ENCODE measurements at regions of chr2 and their contacts with region 1.

Region 1: DNA sequence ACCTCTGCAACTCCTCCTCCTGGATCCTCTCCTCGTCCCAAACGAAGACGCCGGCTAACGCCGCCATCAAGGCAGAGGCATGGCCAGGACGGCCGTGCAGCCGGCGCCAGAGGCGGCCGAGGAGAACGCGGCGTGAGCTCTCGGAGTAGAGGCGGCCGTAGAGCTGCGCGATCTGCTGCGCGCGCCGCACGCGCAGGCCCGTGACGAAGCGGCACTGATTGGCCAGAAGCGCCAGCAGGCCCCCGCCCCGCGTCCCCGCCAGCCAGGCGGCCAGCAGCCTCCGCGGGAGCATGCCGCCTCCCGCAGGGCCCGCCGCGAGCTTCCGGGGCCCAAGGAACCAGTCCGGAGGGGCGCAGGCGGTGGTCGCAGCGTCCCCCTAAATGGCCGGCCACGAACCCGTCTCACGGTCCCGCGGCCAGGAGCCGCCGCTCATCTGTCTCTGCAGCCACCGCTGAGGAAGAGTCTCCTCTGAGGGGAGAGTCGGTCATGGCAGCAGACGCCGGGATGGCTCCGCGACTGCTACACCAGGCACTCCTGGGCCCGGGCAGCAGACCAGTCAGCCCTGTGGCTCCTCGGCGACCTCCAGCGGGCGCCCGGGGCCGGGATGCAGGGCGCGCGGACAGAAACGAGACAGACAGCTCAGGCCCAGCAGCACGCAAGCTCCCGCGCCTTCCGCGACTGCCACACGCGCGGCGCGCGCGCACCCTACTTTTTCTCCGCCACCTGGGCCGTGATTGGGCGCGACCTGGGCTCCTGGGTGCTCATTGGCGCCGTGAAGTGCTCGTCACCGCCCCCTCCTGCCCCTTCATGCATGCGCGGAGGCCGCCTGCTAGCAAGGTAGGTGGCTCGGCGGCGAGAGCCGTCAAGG is at the start of gene STARD7:
- DNase-seq: peak; percentile 98 to 99
- ATAC-seq: peak; percentile 59 to 65
- H3K4me3 ChIP-seq: peak within 1 kb of the TSS; percentile 68 to 94 (median 89)
- H3K27ac ChIP-seq: peak within 1 kb of the TSS; percentile 90 to 99 (median 98)
- H3K4me1 ChIP-seq: peaks cover 31 to 46% of the 10 kb centered on the region in 2 donors
- H3K27me3 ChIP-seq: no peaks in the 10 kb centered on the region
- CTCF ChIP-seq: peak in 4 of 5 experiments; percentile 21 to 46 (median 29)
- POLR2A ChIP-seq: peak; percentile 99 to 100
- total RNA-seq, gene STARD7: 237 to 512 (median 313) TPM

Region 2: GRCh38 chr2:96241900-96242611 is 33.7 kb after region 1 on chr2:
- in situ Hi-C with region 1: no loop called
- intact Hi-C with region 1: loop called (anchors 2 kb)
- DNase-seq: no peak
- ATAC-seq: no peak
- H3K4me3 ChIP-seq: no peak overlapping the region
- H3K27ac ChIP-seq: peak overlapping the region; percentile 72 to 86 (median 78)
- H3K4me1 ChIP-seq: peaks cover 70 to 78% of the 10 kb centered on the region in 2 donors
- H3K27me3 ChIP-seq: no peaks in the 10 kb centered on the region
- CTCF ChIP-seq: no peak
- POLR2A ChIP-seq: no peak

Region 3: DNA sequence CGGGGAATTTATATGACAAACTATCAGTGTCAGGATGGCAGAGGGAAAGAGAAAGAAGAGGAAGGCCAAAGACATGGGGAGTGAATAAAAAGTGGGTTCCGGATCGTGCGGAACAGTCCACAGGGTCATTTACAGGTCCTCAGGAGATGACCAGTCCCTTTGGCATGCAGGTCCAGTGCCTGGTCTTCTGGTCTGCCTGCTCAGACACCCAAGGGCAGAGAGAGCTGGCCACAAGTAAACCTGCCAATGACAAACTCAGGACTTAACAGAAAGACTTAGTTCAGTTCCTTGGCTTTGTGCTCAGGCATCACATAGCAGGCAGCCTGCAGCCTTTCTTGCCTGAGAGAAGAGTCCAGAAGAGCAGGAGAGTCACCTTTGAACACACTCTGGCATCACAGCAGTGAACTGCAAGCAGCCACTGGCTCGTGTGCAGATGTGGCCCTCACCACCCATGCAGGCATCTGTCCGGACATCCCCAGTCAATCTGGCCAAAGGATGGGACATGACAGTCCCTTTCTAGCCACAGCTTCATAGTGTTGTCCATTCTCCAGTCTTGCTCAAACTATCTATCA is 43.4 kb after region 1 on chr2:
- in situ Hi-C with region 1: loop called in 1 of 4 experiments (anchors 10 kb)
- intact Hi-C with region 1: no loop called
- DNase-seq: peak; percentile 90 to 98
- ATAC-seq: peak; percentile 90 to 92
- H3K4me3 ChIP-seq: peak overlapping the region in 1 of 4 donors; percentile 45
- H3K27ac ChIP-seq: peak overlapping the region; percentile 94 to 99 (median 96)
- H3K4me1 ChIP-seq: peaks cover 78 to 86% of the 10 kb centered on the region in 2 donors
- H3K27me3 ChIP-seq: no peaks in the 10 kb centered on the region
- CTCF ChIP-seq: no peak
- POLR2A ChIP-seq: no peak

Region 4: GRCh38 chr2:96260404-96261260 is 52.3 kb after region 1 on chr2:
- in situ Hi-C with region 1: loop called in 3 of 4 experiments (anchors 5 to 10 kb)
- intact Hi-C with region 1: loop called (anchors 1 kb)
- DNase-seq: peak; percentile 91
- ATAC-seq: peak; percentile 82 to 83
- H3K4me3 ChIP-seq: peak overlapping the region in 3 of 4 donors; percentile 17 to 40 (median 25)
- H3K27ac ChIP-seq: peak overlapping the region; percentile 94 to 99 (median 96)
- H3K4me1 ChIP-seq: peaks cover 89 to 93% of the 10 kb centered on the region in 2 donors
- H3K27me3 ChIP-seq: no peaks in the 10 kb centered on the region
- CTCF ChIP-seq: peak in 4 of 5 experiments; percentile 38 to 53 (median 42)
- POLR2A ChIP-seq: peak; percentile 30 to 68